ENCODE measurements at regions of chr6 and their contacts with region 1.

Region 1: DNA sequence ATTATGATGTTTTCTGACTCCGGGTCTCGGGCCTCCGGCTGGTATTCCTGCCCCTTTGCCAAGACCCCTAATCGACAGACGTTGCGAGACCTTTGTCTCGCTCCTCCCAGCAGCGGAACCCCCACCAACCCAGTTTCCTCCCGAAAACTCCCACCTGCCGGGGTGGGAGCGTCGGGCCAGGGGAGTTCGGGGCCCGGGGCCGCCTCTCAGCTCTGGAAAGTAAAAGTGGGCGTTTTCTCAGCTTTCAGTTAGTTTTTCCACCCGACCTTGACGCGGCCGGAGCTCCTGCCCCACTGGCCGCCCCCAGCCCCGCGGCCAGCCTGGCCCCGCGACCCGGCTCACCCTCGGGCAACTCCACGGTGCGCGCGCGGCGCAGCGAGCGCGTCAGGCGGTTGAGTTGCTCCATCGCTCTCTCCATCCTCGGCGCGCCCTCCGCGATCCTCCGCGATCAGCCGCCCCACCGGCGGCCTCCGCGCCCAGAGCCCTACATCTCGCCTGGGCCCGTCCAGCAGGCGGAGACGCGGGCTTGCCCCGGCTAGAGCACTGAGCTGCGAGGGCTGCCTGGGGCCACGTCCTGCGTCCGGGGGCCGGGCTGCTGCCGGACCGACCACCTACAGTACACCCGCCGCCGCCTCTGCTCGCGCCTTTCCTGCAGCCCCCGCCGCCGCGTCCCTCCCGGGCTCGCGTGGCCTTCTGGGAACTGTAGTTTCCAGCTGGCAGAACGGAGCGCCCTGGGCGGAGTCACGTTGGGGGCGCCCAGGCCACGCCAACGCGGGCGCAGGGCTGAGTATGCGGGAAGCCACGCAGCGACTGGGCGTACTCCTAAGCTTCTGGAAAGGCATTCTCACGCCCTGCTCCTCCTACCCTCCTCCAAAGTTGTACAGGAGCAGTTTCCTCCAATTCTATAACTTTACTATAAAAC is at the start of gene HACE1:
- DNase-seq: peak; percentile 94
- ATAC-seq: peak; percentile 96
- H3K4me3 Mint-ChIP-seq: peak within 1 kb of the TSS; percentile 97
- H3K27ac Mint-ChIP-seq: peak within 1 kb of the TSS; percentile 83; the same call in 1 of the 2 replicates
- H3K4me1 Mint-ChIP-seq: peaks cover 20% of the 10 kb centered on the region
- H3K27me3 Mint-ChIP-seq: peaks cover 5% of the 10 kb centered on the region; the same call in 1 of the 2 replicates
- CTCF ChIP-seq: no peak
- total RNA-seq, gene HACE1: 18.1 to 21.7 TPM (median 21.6 TPM) in 3 replicates

Region 2: DNA sequence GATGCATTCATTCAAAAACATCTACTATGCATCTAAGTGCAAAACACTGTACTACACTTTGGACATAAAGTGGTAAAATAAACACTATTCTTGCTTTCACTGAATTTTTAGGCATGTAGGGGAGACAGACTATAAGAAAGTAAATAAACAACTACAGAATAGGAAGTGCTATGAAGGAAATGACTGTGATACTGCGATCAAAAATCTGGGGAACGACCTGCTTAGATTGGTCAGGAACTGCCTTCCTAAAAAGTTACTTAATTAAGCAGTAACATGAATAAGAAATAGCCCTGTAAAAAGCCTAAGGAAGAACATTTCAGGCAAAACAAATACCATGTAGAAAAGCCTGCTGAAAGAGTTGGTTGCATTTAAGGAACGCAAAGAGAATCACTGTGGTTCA is 50.4 kb before region 1 on chr6:
- CTCF ChIA-PET with region 1: no interaction called
- POLR2A ChIA-PET with region 1: no interaction called
- DNase-seq: no peak
- ATAC-seq: no peak
- H3K4me3 Mint-ChIP-seq: no peak overlapping the region
- H3K27ac Mint-ChIP-seq: no peak overlapping the region
- H3K4me1 Mint-ChIP-seq: peaks cover 32% of the 10 kb centered on the region
- H3K27me3 Mint-ChIP-seq: no peaks in the 10 kb centered on the region
- CTCF ChIP-seq: no peak

Region 3: DNA sequence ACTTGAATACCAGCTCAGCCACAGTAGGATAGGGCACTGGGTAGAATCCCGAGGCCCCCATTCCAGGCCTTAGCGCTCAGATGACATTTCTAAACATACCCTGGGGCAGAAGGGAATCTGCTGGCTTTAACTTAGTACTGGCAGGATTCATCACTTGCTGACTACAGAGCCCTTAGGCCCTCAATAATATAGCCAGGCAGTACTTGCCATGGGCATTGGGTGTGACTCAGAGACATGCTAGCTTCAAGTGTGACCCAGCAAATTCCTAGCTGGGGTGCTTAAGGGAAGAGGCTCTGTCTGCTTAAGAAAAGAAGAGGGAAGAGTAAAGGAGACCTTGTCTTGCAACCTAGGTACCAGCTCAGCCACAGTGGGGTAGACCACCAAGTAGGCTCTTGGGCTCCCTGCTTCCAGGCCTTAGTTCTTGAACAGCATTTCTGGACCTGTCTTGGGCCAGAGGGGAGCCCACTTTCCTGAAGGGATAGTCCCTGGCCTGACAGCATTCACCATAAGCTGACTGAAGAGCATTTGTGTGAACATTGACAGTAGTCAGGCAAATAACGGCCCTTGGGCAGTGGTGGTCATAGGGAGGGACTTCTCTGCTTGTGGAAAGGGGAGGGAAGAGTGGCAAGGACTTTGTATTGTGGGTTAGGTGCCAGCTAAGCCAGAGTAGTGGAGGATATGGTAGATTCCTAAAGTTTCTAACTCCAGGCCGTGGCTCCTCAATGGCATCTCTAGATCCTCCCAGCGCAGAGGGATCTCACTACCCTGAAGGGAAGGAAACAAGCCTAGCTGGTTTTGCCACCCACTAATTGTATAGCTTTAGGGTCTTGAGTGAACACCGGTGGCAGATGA is 48.8 kb after region 1 on chr6:
- CTCF ChIA-PET with region 1: no interaction called
- POLR2A ChIA-PET with region 1: no interaction called
- DNase-seq: no peak
- ATAC-seq: no peak
- H3K4me3 Mint-ChIP-seq: no peak overlapping the region
- H3K27ac Mint-ChIP-seq: no peak overlapping the region
- H3K4me1 Mint-ChIP-seq: peaks cover 9% of the 10 kb centered on the region
- H3K27me3 Mint-ChIP-seq: no peaks in the 10 kb centered on the region
- CTCF ChIP-seq: no peak

Region 4: GRCh38 chr6:105024803-105025202 is 165.3 kb after region 1 on chr6:
- CTCF ChIA-PET with region 1: no interaction called
- POLR2A ChIA-PET with region 1: no interaction called
- DNase-seq: no peak
- ATAC-seq: peak; percentile 73
- H3K4me3 Mint-ChIP-seq: peak overlapping the region; percentile 55
- H3K27ac Mint-ChIP-seq: peak overlapping the region; percentile 96
- H3K4me1 Mint-ChIP-seq: peaks cover 43% of the 10 kb centered on the region
- H3K27me3 Mint-ChIP-seq: no peaks in the 10 kb centered on the region
- CTCF ChIP-seq: no peak

Region 5: DNA sequence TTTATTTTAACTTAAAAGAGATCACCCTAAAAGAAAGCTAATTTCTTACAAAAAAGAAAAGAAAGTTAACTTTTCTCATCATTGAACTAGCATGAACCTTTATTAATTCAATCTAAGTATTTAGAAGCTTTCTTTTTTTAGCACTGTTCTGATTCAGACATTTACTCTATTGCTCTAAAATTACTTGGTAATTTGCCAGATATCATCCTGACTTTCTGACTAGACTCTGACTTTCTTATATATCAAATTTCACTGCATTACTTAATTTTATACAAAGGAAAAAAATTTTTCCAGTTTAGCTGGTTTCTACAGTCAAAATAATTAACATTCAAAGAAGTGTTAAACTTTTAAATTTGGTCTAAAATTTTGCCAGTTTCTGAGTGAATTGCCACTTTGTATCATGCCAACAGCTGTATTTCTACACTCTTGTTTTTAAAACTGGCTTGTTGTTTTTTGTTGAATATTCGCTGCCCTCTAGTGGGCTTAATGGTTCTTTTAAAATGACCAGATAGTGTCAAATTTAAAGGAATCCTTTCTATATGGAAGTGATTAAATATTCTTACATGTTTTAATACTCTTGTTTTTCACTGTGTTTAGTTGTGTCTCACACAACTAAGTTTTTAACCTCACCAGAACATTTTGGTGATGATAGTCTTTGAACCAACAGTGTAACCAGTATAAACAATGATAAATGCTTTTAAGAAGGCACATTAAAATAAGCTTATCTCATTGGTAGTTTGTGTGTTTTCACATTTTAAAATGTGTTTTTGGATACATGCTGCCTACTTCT is 218.3 kb after region 1 on chr6:
- CTCF ChIA-PET with region 1: interaction called, 10 read pairs
- POLR2A ChIA-PET with region 1: no interaction called
- DNase-seq: no peak
- ATAC-seq: no peak
- H3K4me3 Mint-ChIP-seq: no peak overlapping the region
- H3K27ac Mint-ChIP-seq: peak overlapping the region; percentile 54; the same call in 1 of the 2 replicates
- H3K4me1 Mint-ChIP-seq: peaks cover 6% of the 10 kb centered on the region; the same call in 1 of the 2 replicates
- H3K27me3 Mint-ChIP-seq: no peaks in the 10 kb centered on the region
- CTCF ChIP-seq: no peak